Testis (tissue), 5 donors: ENCODE measurements at regions of chrX and their contacts with region 1.

Region 1: GRCh38 chrX:1657367-1658070 is 42.7 kb downstream of the ASMT start:
- DNase-seq: peak; percentile 22
- H3K4me3 ChIP-seq: no peak overlapping the region
- H3K27ac ChIP-seq: no peak overlapping the region
- H3K4me1 ChIP-seq: peaks cover 10% of the 10 kb centered on the region
- H3K27me3 ChIP-seq: no peaks in the 10 kb centered on the region
- CTCF ChIP-seq: no peak
- POLR2A ChIP-seq: no peak

Region 2: GRCh38 chrX:1824855-1825254 is 167.3 kb after region 1 on chrX:
- intact Hi-C with region 1: no loop called
- DNase-seq: no peak
- H3K4me3 ChIP-seq: no peak overlapping the region
- H3K27ac ChIP-seq: no peak overlapping the region
- H3K4me1 ChIP-seq: no peaks in the 10 kb centered on the region
- H3K27me3 ChIP-seq: no peaks in the 10 kb centered on the region
- CTCF ChIP-seq: no peak
- POLR2A ChIP-seq: no peak

Region 3: GRCh38 chrX:2608638-2609430 is 951.3 kb after region 1 on chrX:
- intact Hi-C with region 1: loop called (anchors 10 kb)
- DNase-seq: peak; percentile 84
- H3K4me3 ChIP-seq: peak overlapping the region; percentile 72 to 90
- H3K27ac ChIP-seq: peak overlapping the region; percentile 76 to 86
- H3K4me1 ChIP-seq: peaks cover 4% of the 10 kb centered on the region
- H3K27me3 ChIP-seq: no peaks in the 10 kb centered on the region
- CTCF ChIP-seq: no peak
- POLR2A ChIP-seq: no peak